H1 (cell line): ENCODE measurements at regions of chr1 and their contacts with region 1.

Region 1: DNA sequence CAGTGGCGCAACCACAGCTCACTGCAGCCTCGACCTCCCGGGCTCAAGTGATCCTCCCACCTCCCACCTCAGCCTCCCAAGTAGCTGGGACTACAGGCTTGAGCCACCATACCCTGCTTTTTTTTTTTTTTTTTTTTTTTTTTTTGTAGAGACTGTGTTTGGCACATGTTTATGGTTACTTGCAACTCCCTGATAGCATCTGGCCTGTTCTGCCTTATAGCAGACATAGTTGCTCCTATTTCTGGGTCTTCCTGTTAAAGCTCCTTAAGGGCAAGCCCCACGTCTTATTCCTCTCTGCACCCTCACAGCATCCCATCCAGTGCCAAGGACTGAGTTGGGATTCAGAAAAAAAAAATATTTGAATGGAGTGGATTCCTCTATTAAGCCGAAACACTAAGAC is 17.1 kb upstream of the CNR2 start:
- DNase-seq: no peak
- H3K4me3 ChIP-seq: no peak overlapping the region
- H3K27ac ChIP-seq: no peak overlapping the region
- H3K4me1 ChIP-seq: no peaks in the 10 kb centered on the region
- H3K27me3 ChIP-seq: no peaks in the 10 kb centered on the region
- CTCF ChIP-seq: no peak
- EP300 ChIP-seq: no peak
- POLR2A ChIP-seq: no peak
- RAD21 ChIP-seq: no peak

Region 2: GRCh38 chr1:23916209-23917131 is 13.8 kb before region 1 on chr1:
- CTCF ChIA-PET with region 1: interaction called, 10 read pairs
- POLR2A ChIA-PET with region 1: no interaction called
- DNase-seq: peak; percentile 59 to 83
- H3K4me3 ChIP-seq: no peak overlapping the region
- H3K27ac ChIP-seq: no peak overlapping the region
- H3K4me1 ChIP-seq: peaks cover 0 to 2% (median 0%) of the 10 kb centered on the region in 4 experiments; a peak in 2 of 7 replicates
- H3K27me3 ChIP-seq: no peaks in the 10 kb centered on the region
- CTCF ChIP-seq: peak; percentile 67 to 74 (median 73)
- EP300 ChIP-seq: no peak
- POLR2A ChIP-seq: no peak
- RAD21 ChIP-seq: peak; percentile 84 to 88

Region 3: DNA sequence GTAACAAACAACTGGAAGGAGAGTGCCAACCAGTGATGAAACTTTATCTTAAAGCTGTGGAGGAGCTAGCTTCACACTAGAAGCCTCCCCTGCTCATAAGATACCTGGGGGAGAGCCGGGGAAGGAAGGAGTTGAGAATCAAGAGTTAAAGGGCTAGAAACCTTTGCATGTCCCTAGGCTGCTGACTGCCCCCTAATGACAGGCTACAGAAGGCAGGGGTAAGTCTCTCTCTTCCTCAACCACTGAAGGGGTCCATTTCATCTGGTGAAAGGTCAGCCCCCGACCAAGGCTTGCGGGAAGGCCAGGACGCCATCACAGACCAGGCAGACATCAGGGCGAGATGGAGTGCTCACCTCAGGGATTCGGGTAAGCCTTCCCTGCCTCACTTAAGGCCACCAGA is 323.3 kb after region 1 on chr1:
- CTCF ChIA-PET with region 1: no interaction called
- POLR2A ChIA-PET with region 1: no interaction called
- DNase-seq: peak in 1 of 2 experiments; percentile 51
- H3K4me3 ChIP-seq: no peak overlapping the region
- H3K27ac ChIP-seq: no peak overlapping the region
- H3K4me1 ChIP-seq: no peaks in the 10 kb centered on the region; a peak in 1 of 7 replicates
- H3K27me3 ChIP-seq: no peaks in the 10 kb centered on the region
- CTCF ChIP-seq: peak; percentile 47 to 67 (median 57)
- EP300 ChIP-seq: no peak
- POLR2A ChIP-seq: no peak
- RAD21 ChIP-seq: peak; percentile 46 to 62